ENCODE measurements at regions of chr12 and their contacts with region 1.

Region 1: GRCh38 chr12:56117778-56118687 is at the start of gene ZC3H10:
- DNase-seq: peak; percentile 99
- H3K4me3 Mint-ChIP-seq: peak within 1 kb of the TSS; percentile 95
- H3K27ac Mint-ChIP-seq: peak within 1 kb of the TSS; percentile 97
- H3K4me1 Mint-ChIP-seq: peaks cover 37% of the 10 kb centered on the region
- H3K27me3 Mint-ChIP-seq: no peaks in the 10 kb centered on the region
- total RNA-seq, gene ZC3H10: 8.2 to 9.1 TPM

Region 2: GRCh38 chr12:56040963-56041551 is 77.0 kb before region 1 on chr12:
- CTCF ChIA-PET with region 1: no interaction called
- POLR2A ChIA-PET with region 1: no interaction called
- DNase-seq: no peak
- H3K4me3 Mint-ChIP-seq: peak overlapping the region; percentile 100
- H3K27ac Mint-ChIP-seq: peak overlapping the region; percentile 99
- H3K4me1 Mint-ChIP-seq: peaks cover 52% of the 10 kb centered on the region
- H3K27me3 Mint-ChIP-seq: no peaks in the 10 kb centered on the region

Region 3: GRCh38 chr12:56104109-56104814 is 13.8 kb before region 1 on chr12 and contains the start of gene PA2G4:
- CTCF ChIA-PET with region 1: interaction called, 41 read pairs
- POLR2A ChIA-PET with region 1: interaction called, 10 read pairs
- DNase-seq: peak; percentile 99
- H3K4me3 Mint-ChIP-seq: peak within 1 kb of the TSS; percentile 99
- H3K27ac Mint-ChIP-seq: peak within 1 kb of the TSS; percentile 98
- H3K4me1 Mint-ChIP-seq: peaks cover 62% of the 10 kb centered on the region
- H3K27me3 Mint-ChIP-seq: no peaks in the 10 kb centered on the region
- total RNA-seq, gene PA2G4: 244 to 289 TPM

Region 4: DNA sequence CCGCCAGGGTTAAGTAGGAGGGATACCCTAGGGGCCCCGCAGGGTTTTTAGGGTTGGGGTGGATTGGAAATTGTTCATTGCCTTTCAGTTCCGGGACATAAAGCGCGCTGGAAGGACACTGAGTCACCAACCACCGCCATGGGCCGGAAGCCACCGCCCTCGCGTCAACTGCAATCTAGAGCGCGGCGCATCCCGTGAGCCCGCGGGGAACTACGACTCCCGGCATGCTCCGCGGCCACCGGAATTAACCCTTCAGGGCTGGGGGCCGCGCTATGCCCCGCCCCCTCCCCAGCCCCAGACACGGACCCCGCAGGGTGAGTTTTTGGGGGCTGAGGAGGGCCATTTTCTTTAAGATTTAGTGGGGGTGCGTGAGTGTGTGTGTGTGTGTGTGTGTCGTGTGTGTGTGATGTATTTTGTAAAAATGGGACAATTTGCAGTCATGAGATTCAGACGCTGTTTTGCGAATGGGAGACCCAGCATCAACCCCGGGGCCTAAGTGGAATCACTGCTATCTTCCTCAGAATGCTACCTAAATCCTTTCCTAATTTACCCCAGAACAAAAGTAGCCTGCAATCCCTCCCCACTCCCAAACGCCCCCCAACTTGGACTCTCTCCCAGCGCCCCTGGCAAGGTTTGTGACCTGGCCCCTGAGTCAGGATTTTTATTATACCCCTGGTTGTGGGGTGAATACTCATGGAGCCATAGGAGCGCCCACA is 34.4 kb after region 1 on chr12 and contains the start of gene MYL6B:
- CTCF ChIA-PET with region 1: interaction called, 12 read pairs
- POLR2A ChIA-PET with region 1: interaction called, 3 read pairs
- DNase-seq: peak; percentile 96
- H3K4me3 Mint-ChIP-seq: peak within 1 kb of the TSS; percentile 83
- H3K27ac Mint-ChIP-seq: peak within 1 kb of the TSS; percentile 98
- H3K4me1 Mint-ChIP-seq: peaks cover 52% of the 10 kb centered on the region
- H3K27me3 Mint-ChIP-seq: no peaks in the 10 kb centered on the region
- total RNA-seq, gene MYL6B: 56.6 to 63.4 TPM

Measured in activated CD4-positive, alpha-beta T cell treated with anti-CD3 and anti-CD28 coated beads, Interleukin-2, amount 10 ng/mL, durations not matched to agents 7 days and 5 days (primary cell).